ENCODE measurements at regions of chr7 and their contacts with region 1.

Region 1: DNA sequence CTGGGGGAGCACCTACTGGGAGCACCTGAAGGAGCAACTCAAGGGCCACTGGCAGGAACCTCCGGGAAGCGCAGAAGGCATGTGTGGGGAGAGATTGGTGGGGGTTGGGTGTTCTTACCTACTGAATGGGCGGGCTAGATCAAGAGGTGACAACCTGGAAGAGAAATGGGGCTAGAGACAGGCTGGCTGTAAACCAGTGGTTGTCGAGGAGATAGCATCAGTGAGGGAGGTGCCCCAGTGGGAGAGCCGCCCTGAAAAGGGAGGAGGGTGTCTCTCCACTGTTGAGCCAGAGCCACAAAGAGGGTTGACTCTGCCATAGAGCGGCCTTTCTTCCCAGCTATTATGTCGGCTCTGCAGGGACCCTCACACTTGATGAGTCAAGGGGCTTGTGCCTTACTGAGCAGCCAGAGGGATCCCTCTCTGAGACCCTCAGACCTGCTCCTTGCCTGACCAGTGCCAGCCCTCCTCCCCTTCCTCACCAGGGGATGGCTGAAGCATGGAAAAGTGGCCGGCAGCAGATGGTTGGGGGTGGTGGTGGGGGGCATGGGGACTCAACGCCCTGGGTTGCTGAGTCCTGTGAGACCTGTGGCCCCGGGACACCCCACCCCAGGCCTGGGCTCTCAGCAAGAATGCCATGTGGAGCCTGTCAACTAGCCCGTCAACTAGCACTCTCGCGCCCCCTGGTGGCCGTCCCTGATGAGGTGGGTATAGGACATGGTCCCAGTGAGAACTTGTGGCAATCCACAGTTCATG is 36.5 kb upstream of the PURB start:
- DNase-seq: peak; percentile 69
- H3K4me3 ChIP-seq: no peak overlapping the region
- H3K27ac ChIP-seq: no peak overlapping the region
- H3K4me1 ChIP-seq: no peaks in the 10 kb centered on the region
- H3K27me3 ChIP-seq: peaks cover 0 to 3% of the 10 kb centered on the region in 2 experiments
- CTCF ChIP-seq: peak; percentile 75 to 91
- POLR2A ChIP-seq: no peak

Region 2: GRCh38 chr7:44257618-44258422 is 664.0 kb before region 1 on chr7:
- CTCF ChIA-PET with region 1: no interaction called
- POLR2A ChIA-PET with region 1: no interaction called
- dilution Hi-C with region 1: no loop called
- intact Hi-C with region 1: no loop called
- DNase-seq: peak; percentile 89
- H3K4me3 ChIP-seq: no peak overlapping the region
- H3K27ac ChIP-seq: peak overlapping the region; percentile 86
- H3K4me1 ChIP-seq: peaks cover 29% of the 10 kb centered on the region
- H3K27me3 ChIP-seq: no peaks in the 10 kb centered on the region
- CTCF ChIP-seq: no peak
- POLR2A ChIP-seq: no peak

Region 3: GRCh38 chr7:44858161-44858560 is 63.6 kb before region 1 on chr7:
- CTCF ChIA-PET with region 1: interaction called, 65 read pairs
- POLR2A ChIA-PET with region 1: no interaction called
- dilution Hi-C with region 1: no loop called
- intact Hi-C with region 1: loop called (anchors 1 kb)
- DNase-seq: no peak
- H3K4me3 ChIP-seq: no peak overlapping the region
- H3K27ac ChIP-seq: no peak overlapping the region
- H3K4me1 ChIP-seq: no peaks in the 10 kb centered on the region
- H3K27me3 ChIP-seq: no peaks in the 10 kb centered on the region
- CTCF ChIP-seq: no peak
- POLR2A ChIP-seq: no peak